PC-3 (cell line): ENCODE measurements at regions of chr4 and their contacts with region 1.

Region 1: GRCh38 chr4:26727844-26728243 is 132.8 kb upstream of the STIM2 start:
- DNase-seq: no peak
- ATAC-seq: no peak
- H3K4me3 ChIP-seq: no peak overlapping the region
- H3K27ac ChIP-seq: no peak overlapping the region
- H3K4me1 ChIP-seq: no peaks in the 10 kb centered on the region
- H3K27me3 ChIP-seq: no peaks in the 10 kb centered on the region
- CTCF ChIP-seq: no peak

Region 2: DNA sequence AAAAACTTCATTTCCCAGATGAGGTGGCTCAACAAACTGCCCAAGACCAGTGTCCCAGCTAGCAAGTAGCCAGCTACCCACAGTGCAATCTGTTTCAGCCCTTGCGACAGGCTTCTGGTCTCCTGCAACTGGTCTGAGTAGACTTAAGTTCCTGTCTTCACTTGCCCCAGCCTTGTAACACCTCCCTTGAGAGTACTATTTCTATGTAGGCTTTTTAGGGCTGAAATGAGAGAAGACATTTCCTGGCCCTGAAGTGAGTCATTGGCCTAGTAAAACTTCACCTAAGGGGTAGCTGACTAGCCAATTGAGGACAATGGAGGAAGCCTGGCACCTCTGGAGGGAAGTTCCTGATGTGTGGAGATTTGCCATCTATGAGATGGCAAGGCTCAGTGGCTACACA is 52.7 kb after region 1 on chr4:
- CTCF ChIA-PET with region 1: no interaction called
- POLR2A ChIA-PET with region 1: no interaction called
- intact Hi-C with region 1: loop called (anchors 5 kb)
- DNase-seq: peak; percentile 83
- ATAC-seq: peak; percentile 84
- H3K4me3 ChIP-seq: no peak overlapping the region
- H3K27ac ChIP-seq: peak overlapping the region; percentile 82
- H3K4me1 ChIP-seq: peaks cover 47% of the 10 kb centered on the region
- H3K27me3 ChIP-seq: no peaks in the 10 kb centered on the region
- CTCF ChIP-seq: no peak

Region 3: GRCh38 chr4:27010334-27010940 is 282.6 kb after region 1 on chr4:
- CTCF ChIA-PET with region 1: no interaction called
- POLR2A ChIA-PET with region 1: no interaction called
- intact Hi-C with region 1: loop called (anchors 5 kb)
- DNase-seq: peak; percentile 66
- ATAC-seq: peak; percentile 25; the same call in 1 of the 2 replicates
- H3K4me3 ChIP-seq: no peak overlapping the region
- H3K27ac ChIP-seq: no peak overlapping the region; the same call in 1 of the 2 replicates
- H3K4me1 ChIP-seq: peaks cover 53% of the 10 kb centered on the region
- H3K27me3 ChIP-seq: no peaks in the 10 kb centered on the region
- CTCF ChIP-seq: peak; percentile 73